ENCODE measurements at regions of chr10 and their contacts with region 1.

Region 1: DNA sequence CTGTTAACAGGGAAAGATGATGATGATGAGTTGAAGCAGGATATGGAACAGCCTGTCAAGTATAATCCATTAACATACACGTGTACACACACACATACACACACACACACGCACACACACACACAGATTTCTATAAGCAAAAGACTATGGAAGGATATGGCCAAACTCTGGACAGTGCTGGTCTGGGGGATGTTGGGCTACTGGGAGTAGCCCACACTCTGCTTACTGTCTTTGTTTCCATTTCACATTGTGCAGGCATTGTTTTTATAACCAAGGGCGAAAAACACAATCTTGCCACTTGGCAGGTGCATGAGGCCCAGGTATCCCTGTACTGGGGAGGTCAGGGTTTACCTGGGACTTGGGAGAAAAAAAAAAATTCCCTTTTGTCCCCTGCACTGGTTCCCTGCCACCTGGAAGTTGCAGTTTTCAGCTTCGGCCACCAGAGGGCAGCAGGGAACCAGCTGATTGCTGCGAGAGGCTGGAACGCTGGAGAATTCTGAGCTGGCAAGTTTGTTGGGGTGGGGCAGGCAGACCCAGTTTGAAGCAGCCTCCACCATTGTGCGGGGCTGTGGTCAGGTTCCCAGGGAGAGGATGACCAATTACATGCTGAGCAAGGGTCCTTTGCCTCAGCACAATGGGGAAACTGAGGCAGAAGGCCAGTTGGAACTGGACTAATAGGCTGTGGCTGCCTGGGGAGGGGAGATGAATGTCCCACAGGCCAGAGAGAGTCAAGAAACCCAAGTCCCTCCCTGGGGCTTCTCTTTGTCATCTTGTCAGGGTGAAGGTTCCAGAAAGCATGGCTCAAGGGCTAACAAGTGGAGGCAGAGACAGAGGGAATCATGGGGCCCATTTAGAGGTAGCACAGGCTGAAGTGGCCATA is 27.3 kb downstream of the PPIF start:
- DNase-seq: peak; percentile 91

Region 2: DNA sequence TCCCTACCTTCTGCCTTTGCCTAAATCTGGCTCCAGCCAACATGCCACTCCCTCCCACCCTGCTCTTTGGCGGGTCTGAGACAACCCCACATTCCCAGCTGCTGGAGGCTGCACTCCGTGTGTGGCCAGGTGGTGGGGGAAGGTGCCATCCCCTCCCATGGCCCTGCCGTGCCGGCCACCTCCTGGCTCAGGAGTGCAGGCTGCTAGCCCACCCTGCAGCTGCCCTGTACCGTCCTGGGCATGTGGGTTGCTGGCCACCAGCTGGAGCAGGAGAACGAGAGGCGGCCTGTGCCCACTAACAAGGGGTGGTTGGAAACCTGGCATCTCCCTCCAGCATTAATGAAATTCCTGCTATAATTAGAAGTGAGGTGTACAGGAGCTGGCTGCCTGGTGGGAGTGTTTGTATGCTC is 208.2 kb before region 1 on chr10:
- intact Hi-C with region 1: no loop called
- DNase-seq: no peak

Region 3: GRCh38 chr10:79463578-79464496 is 89.3 kb after region 1 on chr10:
- intact Hi-C with region 1: loop called (anchors 2 kb)
- DNase-seq: no peak

Region 4: DNA sequence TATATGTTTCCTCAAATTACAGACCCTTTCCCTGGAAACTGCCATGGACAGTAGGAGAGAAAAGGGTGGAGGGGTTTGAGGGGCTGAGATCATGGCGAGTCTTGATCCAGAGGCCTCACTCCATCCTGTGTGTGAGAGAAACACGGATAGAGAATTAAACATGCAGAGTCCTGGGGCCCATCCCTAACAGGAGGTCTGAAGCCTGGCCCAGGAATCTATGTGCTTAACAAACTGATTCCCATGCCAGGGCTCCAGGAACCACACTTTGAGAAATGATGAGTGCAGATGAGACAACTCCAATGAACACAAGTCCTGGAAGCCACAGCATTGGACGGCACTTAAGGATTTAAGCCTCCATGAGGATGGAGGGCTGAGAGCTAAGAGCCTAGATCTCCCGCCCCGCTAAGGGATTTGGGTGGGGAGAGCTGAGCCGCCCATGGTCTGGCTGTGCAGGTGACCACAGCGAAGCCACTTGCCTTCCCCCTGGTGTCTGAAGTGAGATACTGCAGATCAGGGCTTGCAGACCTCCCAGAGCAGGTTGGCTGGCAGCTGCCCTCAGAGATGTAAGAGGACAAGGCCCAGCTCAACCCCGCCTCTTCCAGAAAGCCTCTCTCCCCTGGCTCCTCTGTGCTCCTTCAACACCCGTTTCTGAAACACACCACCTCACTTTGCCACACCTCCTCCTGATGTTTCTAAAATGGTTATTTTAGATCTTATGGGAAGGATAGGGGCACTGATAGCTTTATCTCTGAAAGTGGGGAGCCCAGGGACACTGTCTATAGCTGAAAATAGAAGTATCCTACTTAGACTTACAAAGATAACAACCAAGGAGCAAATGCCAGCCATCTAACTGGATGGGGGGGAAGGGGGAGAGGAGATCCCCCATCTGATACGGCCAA is 113.0 kb after region 1 on chr10:
- intact Hi-C with region 1: loop called (anchors 1 kb)
- DNase-seq: no peak